Prostate gland (tissue), 2 donors: ENCODE measurements at regions of chr5 and their contacts with region 1.

Region 1: DNA sequence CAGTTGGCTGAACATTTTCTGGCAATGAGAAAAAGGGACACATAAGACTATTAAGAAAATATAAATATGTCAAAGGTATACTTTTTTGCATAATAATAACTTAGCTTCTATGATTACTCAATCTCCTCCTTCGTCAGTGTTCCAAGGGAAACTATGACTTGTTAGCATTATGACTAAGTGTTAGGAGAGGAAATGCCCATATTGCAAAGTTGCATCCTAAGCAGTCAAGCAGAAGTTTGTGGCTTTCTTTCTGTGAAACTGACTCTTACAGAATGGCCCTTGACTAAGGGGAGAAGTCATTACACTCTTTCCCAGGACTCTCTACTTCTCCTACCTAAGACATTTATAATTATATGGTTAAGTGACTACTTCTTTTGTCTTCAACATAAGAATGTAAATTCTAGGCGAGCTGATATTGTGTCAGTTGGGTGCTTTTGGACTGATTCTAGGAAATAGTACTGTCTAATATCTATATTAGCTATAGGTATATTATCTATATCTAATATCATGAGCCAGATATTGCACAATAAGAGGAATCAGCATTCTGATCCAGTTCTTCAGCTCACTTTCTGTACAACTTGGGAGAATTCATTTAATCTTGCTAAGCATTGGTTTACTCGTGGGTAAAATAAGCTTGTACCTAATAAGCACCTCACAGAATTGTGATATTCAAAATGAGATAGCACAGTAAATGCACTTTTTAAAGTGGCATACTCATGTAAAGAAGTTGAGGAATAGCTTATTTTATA is 16.4 kb upstream of the SPINK6 start:
- DNase-seq: no peak
- H3K4me3 ChIP-seq: no peak overlapping the region
- H3K27ac ChIP-seq: no peak overlapping the region
- H3K4me1 ChIP-seq: no peaks in the 10 kb centered on the region
- H3K27me3 ChIP-seq: no peaks in the 10 kb centered on the region
- CTCF ChIP-seq: no peak
- POLR2A ChIP-seq: no peak

Region 2: DNA sequence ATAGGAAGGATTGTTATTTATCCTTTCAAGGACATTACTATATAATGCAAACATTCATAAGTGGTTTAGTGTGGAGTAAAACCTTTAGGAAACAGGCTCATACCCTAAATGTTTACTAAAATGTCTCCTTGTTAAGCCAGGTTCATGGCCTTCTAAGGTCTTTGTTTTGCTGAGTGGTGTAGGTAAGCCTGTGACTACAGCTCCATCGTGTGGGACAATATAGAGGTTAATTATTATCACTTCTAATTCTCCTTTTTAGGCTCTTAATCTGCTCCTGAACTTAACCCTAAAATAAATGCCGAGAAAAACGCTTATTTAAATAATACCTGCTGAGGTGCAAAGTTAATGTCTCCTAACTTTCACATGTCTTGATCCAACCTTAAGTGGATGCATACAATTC is 78.8 kb before region 1 on chr5:
- intact Hi-C with region 1: no loop called
- DNase-seq: no peak
- H3K4me3 ChIP-seq: no peak overlapping the region
- H3K27ac ChIP-seq: no peak overlapping the region
- H3K4me1 ChIP-seq: no peaks in the 10 kb centered on the region
- H3K27me3 ChIP-seq: no peaks in the 10 kb centered on the region
- CTCF ChIP-seq: peak in 2 of 4 experiments; percentile 33 to 46
- POLR2A ChIP-seq: no peak

Region 3: GRCh38 chr5:148374692-148375360 is 188.4 kb after region 1 on chr5:
- intact Hi-C with region 1: loop called (anchors 10 kb)
- DNase-seq: peak; percentile 47
- H3K4me3 ChIP-seq: no peak overlapping the region
- H3K27ac ChIP-seq: no peak overlapping the region
- H3K4me1 ChIP-seq: no peaks in the 10 kb centered on the region
- H3K27me3 ChIP-seq: no peaks in the 10 kb centered on the region
- CTCF ChIP-seq: peak in 3 of 4 experiments; percentile 59 to 77 (median 67)
- POLR2A ChIP-seq: no peak